Stomach (tissue), 19 donors: ENCODE measurements at regions of chr10 and their contacts with region 1.

Region 1: DNA sequence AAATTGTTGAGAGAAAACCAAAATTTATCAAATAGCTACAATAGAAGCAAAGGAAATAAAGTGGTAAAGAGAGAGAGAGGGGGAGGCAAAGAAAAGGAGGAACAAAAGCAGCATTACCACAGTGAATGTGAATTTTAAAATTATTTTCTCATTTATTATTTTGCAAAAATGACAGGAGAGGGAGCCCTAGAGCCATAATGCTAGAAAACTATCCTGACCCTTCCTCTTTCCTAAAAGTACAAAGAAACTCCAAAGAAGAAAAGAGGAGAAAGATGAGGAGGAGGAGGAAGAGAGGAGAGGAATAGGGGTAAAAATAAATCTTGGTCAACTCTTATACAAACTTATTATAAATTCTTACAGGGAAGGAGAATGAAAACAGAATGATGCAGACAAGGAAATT is 921.5 kb downstream of the NRG3 start:
- DNase-seq: peak in 1 of 2 donors; percentile 42
- H3K4me3 ChIP-seq: no peak overlapping the region
- H3K27ac ChIP-seq: no peak overlapping the region
- H3K4me1 ChIP-seq: no peaks in the 10 kb centered on the region
- H3K27me3 ChIP-seq: no peaks in the 10 kb centered on the region
- CTCF ChIP-seq: peak in 2 of 7 experiments; percentile 25 to 38
- EP300 ChIP-seq: no peak
- POLR2A ChIP-seq: no peak

Region 2: DNA sequence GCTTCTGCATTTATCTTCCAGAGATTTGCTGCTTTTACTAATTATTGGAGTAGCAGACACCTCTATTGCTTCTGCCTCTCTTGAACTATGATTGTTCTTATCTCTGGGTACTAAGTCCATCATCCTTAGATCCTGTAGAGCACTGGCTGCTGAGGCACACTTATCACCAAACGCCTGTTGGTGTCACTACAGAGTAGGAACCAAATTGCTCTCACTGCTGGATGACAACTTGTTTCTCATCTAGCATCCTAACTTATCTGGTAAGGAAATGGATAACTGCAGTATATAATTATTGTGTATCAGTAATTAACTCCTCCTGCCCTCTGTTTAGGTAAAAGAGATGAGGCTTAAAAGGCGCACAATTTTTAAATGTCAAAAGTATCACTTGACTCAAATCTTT is 137.9 kb after region 1 on chr10:
- intact Hi-C with region 1: no loop called
- DNase-seq: no peak
- H3K4me3 ChIP-seq: no peak overlapping the region
- H3K27ac ChIP-seq: no peak overlapping the region
- H3K4me1 ChIP-seq: no peaks in the 10 kb centered on the region
- H3K27me3 ChIP-seq: no peaks in the 10 kb centered on the region
- CTCF ChIP-seq: no peak
- EP300 ChIP-seq: no peak
- POLR2A ChIP-seq: no peak

Region 3: GRCh38 chr10:82969405-82969804 is 172.9 kb after region 1 on chr10:
- intact Hi-C with region 1: loop called (anchors 10 kb)
- DNase-seq: peak in 1 of 2 donors; percentile 21
- H3K4me3 ChIP-seq: no peak overlapping the region
- H3K27ac ChIP-seq: no peak overlapping the region
- H3K4me1 ChIP-seq: no peaks in the 10 kb centered on the region
- H3K27me3 ChIP-seq: no peaks in the 10 kb centered on the region
- CTCF ChIP-seq: peak in 3 of 7 experiments; percentile 28 to 55 (median 52)
- EP300 ChIP-seq: no peak
- POLR2A ChIP-seq: no peak

Region 4: DNA sequence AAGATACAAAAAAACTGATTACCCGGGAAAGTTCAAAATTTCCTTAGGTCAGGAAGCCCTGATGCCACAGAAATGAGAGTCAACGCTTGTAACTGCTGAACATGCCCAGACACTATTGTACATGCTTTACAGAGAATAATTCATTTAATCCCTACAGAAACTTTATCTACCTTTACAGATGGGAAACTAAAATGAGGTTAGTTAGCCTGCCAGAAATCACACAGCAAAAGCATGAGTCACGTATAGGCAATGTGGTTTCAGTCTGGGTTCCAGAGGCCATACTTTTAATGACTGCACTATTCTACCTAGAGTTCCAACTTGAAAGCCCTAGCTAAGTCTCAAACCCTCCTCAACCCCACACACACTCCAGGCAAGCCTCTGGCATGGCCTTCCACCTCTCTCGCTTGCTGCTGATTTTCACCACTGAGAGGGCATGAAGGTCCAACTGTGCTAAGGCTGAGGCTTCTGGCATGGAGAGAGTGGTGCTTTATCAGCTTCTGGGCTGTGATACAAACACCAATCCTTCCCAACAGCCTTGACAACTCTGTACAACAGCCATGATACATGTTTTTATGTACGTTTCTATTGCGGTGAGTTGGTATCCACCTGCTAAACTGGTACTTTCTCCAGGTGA is 331.5 kb after region 1 on chr10:
- intact Hi-C with region 1: no loop called
- DNase-seq: no peak
- H3K4me3 ChIP-seq: no peak overlapping the region
- H3K27ac ChIP-seq: no peak overlapping the region
- H3K4me1 ChIP-seq: no peaks in the 10 kb centered on the region
- H3K27me3 ChIP-seq: no peaks in the 10 kb centered on the region
- CTCF ChIP-seq: no peak
- EP300 ChIP-seq: no peak
- POLR2A ChIP-seq: no peak

Region 5: GRCh38 chr10:83625831-83626360 is 829.4 kb after region 1 on chr10:
- intact Hi-C with region 1: no loop called
- DNase-seq: no peak
- H3K4me3 ChIP-seq: no peak overlapping the region
- H3K27ac ChIP-seq: no peak overlapping the region
- H3K4me1 ChIP-seq: no peaks in the 10 kb centered on the region
- H3K27me3 ChIP-seq: no peaks in the 10 kb centered on the region
- CTCF ChIP-seq: no peak
- EP300 ChIP-seq: no peak
- POLR2A ChIP-seq: no peak

Region 6: GRCh38 chr10:83871187-83872081 is 1074.9 kb after region 1 on chr10:
- intact Hi-C with region 1: loop called (anchors 10 kb)
- DNase-seq: peak; percentile 73 to 90
- H3K4me3 ChIP-seq: no peak overlapping the region
- H3K27ac ChIP-seq: no peak overlapping the region
- H3K4me1 ChIP-seq: peaks cover 0 to 7% (median 2%) of the 10 kb centered on the region in 4 donors
- H3K27me3 ChIP-seq: no peaks in the 10 kb centered on the region
- CTCF ChIP-seq: peak in 6 of 7 experiments; percentile 78 to 92 (median 88)
- EP300 ChIP-seq: no peak
- POLR2A ChIP-seq: no peak